WTC11 (cell line): ENCODE measurements at regions of chr15 and their contacts with region 1.

Region 1: DNA sequence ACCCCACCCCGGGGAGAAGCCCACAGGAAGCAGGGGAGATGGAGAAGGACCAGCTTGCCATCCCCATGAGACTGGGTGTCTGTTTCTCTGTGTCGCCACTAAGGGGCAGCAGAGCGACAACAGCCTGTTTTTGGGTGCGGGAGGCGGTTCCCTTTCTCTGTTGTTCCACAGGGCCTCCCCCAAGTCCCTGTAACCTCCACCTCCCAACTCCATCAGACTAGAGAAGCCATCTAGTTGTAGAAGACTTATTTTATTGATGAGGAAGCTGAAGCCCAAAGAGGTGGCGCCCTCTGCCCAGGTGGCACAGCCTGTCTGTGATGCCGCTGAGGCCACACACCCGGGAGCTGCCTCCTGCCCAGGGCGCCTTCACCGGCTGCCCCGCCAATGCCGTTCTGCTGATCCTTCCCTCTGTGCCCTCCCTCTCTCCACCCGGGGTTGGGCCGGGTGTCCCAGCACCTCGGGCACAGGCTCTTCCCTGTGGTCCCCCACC is 3.9 kb upstream of the CCDC9B start:
- DNase-seq: peak; percentile 78
- ATAC-seq: peak; percentile 74
- H3K4me3 Mint-ChIP-seq: no peak overlapping the region
- H3K27ac Mint-ChIP-seq: no peak overlapping the region
- H3K4me1 Mint-ChIP-seq: peaks cover 17% of the 10 kb centered on the region
- H3K27me3 Mint-ChIP-seq: no peaks in the 10 kb centered on the region
- CTCF ChIP-seq: peak; percentile 59

Region 2: GRCh38 chr15:40016224-40016865 is 328.3 kb before region 1 on chr15:
- CTCF ChIA-PET with region 1: no interaction called
- POLR2A ChIA-PET with region 1: no interaction called
- DNase-seq: no peak
- ATAC-seq: no peak
- H3K4me3 Mint-ChIP-seq: no peak overlapping the region
- H3K27ac Mint-ChIP-seq: no peak overlapping the region
- H3K4me1 Mint-ChIP-seq: no peaks in the 10 kb centered on the region
- H3K27me3 Mint-ChIP-seq: peaks cover 4% of the 10 kb centered on the region; the same call in 1 of the 2 replicates
- CTCF ChIP-seq: no peak

Region 3: DNA sequence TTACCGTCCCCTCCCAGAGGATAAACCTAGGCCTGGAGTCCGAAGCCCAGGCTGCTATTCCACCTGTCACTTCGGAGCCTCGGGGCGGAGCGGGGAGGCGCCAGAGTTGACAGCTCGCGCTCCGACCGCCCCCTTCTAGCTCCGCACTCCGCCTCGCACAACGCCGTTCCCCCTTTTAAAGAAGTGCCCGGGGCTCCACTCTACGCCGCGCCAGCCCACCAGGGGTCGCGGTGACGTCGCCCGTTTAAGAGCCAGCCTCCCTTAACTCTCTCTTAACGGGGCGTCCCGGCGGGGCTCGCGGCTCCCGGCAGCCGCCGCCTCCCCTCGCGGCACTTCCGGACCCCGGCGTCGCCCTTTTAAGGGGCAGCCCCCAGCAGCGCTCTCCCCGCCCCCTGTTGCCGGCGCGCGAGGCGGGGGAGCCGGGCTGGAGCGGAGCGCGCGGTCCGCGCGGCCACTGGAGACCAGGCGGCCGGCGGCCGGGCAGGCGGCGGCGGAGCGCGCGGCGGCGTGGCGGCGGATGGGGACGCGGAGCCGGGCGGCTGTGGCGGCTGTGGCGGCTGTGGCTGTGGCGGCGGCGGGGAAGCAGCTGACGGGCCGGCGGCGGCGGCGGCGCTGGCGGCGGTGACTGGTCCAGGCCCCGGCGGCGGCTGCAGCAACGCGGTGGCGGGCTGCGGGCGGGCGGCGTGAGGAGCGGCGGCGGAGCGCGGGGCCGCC is 21.3 kb before region 1 on chr15 and contains the start of gene INAFM2:
- CTCF ChIA-PET with region 1: interaction called, 264 read pairs
- POLR2A ChIA-PET with region 1: interaction called, 5 read pairs
- DNase-seq: peak; percentile 96
- ATAC-seq: peak; percentile 82
- H3K4me3 Mint-ChIP-seq: peak within 1 kb of the TSS; percentile 68
- H3K27ac Mint-ChIP-seq: no peak within 1 kb of the TSS
- H3K4me1 Mint-ChIP-seq: peaks cover 62% of the 10 kb centered on the region
- H3K27me3 Mint-ChIP-seq: peaks cover 25% of the 10 kb centered on the region
- CTCF ChIP-seq: no peak
- total RNA-seq, gene INAFM2: 28.2 to 34.2 TPM (median 30.3 TPM) in 3 replicates

Region 4: DNA sequence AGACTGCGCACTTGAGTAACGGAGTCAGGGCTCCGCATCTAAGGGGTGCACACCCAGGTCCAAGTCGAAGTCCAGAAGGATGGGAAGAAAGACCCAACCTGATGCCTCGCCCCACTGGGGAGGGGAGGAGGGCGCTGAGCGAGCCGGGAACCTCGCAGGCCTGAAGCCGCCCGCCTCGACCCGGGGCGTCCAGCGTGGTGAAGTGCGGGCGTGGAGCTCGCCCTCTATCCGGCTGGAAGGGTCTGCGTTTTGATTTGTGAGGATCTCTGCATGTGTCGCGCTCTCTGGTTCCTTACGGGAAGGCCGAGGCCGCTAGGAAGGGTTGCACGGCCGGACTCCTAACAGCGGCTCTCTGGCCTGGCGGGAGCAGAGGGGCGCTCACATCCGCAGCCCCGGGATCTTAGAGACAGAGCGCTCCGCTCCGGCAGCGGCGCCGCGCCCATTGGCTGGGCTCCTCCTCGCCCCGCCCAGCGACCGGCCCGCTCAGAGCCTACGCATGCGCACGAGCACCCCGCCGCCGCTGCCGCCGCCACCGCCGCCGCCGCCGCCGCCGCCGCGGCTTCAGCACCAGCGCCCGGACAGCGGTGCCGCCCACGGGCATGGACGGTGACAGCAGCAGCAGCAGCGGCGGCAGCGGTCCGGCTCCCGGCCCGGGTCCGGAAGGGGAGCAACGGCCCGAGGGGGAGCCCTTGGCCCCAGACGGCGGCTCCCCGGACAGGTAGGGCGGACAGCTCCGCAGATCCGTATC is 13.2 kb after region 1 on chr15 and contains the start of gene DISP2:
- CTCF ChIA-PET with region 1: interaction called, 63 read pairs
- POLR2A ChIA-PET with region 1: no interaction called
- DNase-seq: peak; percentile 91
- ATAC-seq: peak; percentile 88
- H3K4me3 Mint-ChIP-seq: peak within 1 kb of the TSS; percentile 78
- H3K27ac Mint-ChIP-seq: no peak within 1 kb of the TSS
- H3K4me1 Mint-ChIP-seq: peaks cover 29% of the 10 kb centered on the region
- H3K27me3 Mint-ChIP-seq: peaks cover 34% of the 10 kb centered on the region
- CTCF ChIP-seq: no peak
- total RNA-seq, gene DISP2: 1.0 to 3.5 TPM (median 1.9 TPM) in 3 replicates

Region 5: GRCh38 chr15:40382580-40383456 is 38.1 kb after region 1 on chr15 and contains the start of gene KNSTRN:
- CTCF ChIA-PET with region 1: interaction called, 16 read pairs
- POLR2A ChIA-PET with region 1: interaction called, 3 read pairs
- DNase-seq: peak; percentile 98
- ATAC-seq: peak; percentile 100
- H3K4me3 Mint-ChIP-seq: peak within 1 kb of the TSS; percentile 92
- H3K27ac Mint-ChIP-seq: peak within 1 kb of the TSS; percentile 98
- H3K4me1 Mint-ChIP-seq: peaks cover 22% of the 10 kb centered on the region
- H3K27me3 Mint-ChIP-seq: no peaks in the 10 kb centered on the region
- CTCF ChIP-seq: no peak
- total RNA-seq, gene KNSTRN: 58.7 to 73.4 TPM (median 64.6 TPM) in 3 replicates

Region 6: DNA sequence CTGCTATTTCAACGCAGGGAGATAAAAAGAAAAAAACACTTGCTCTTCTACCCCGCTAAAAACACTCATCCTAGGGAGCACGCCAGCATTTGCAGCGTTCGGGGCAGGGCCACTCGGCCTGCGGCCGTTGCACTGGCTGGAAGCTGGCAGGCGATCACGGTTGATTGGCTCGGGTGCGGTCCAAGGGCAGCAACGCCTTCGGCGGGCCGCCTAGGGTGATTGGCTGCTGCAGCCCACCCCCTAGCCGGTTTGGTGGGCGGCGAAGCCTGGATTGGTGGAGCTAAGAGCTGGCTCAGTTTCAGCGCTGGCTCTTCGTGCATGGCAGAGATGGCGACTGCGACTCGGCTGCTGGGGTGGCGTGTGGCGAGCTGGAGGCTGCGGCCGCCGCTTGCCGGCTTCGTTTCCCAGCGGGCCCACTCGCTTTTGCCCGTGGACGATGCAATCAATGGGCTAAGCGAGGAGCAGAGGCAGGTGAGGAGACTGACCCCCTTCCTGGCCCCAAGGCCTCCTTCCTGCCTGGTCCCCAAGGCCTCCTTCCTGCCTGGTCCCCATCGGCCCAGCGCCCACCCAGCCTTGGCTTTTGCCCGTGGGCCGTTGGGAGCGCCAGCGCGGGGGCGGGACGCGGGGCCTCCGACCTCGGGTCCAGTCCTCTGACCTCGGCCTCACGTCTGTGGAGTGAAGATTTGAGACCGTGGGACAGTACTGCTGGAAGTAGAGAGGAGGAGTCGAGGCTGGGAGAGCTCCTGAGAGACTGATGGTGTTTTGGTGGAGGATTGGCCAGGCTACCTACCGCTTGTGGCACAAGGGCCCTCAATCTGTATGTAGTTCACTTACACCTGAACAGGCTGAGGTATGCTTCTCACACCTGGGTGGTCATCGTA is 61.1 kb after region 1 on chr15 and contains the start of gene IVD:
- CTCF ChIA-PET with region 1: interaction called, 11 read pairs
- POLR2A ChIA-PET with region 1: no interaction called
- DNase-seq: peak; percentile 95
- ATAC-seq: peak; percentile 100
- H3K4me3 Mint-ChIP-seq: peak within 1 kb of the TSS; percentile 88
- H3K27ac Mint-ChIP-seq: peak within 1 kb of the TSS; percentile 96
- H3K4me1 Mint-ChIP-seq: peaks cover 17% of the 10 kb centered on the region
- H3K27me3 Mint-ChIP-seq: no peaks in the 10 kb centered on the region
- CTCF ChIP-seq: no peak
- total RNA-seq, gene IVD: 82.2 to 96.1 TPM (median 89.3 TPM) in 3 replicates